B cell (primary cell): ENCODE measurements at regions of chr5 and their contacts with region 1.

Region 1: DNA sequence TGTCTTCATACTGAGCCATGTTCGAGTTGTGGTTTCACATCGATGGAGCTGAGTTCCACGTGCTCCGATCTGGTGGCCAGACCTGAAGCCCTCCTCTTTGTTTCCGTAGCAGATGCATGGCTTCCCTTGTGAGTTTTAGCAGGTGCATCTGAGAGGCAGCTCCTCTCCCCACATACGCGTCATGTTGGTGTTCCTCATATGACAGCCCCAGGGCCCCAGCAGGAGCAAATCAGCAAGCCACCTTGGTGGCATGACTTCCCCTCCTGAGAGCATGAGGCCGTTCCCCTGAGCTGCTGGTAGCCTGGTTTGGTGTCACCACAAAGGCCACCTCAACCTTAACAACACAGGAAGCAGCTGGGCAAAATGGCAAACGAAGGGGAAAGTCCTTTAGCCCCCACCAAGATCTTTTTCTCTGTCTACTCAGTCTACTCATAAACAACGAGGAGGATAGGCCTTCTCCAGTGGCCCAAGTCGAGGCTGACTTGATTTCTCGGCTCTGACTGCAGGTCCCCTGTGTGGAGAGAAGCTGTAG is 5.9 kb downstream of the CYFIP2 start:
- DNase-seq: peak; percentile 98
- ATAC-seq: peak; percentile 89
- H3K4me3 ChIP-seq: peak overlapping the region in 3 of 5 experiments; percentile 4 to 39 (median 32)
- H3K4me3 Mint-ChIP-seq: peak overlapping the region; percentile 82
- H3K27ac ChIP-seq: peak overlapping the region; percentile 99
- H3K27ac Mint-ChIP-seq: peak overlapping the region; percentile 99
- H3K4me1 ChIP-seq: peaks cover 81 to 92% of the 10 kb centered on the region in 2 donors
- H3K4me1 Mint-ChIP-seq: peaks cover 90% of the 10 kb centered on the region
- H3K27me3 ChIP-seq: no peaks in the 10 kb centered on the region
- H3K27me3 Mint-ChIP-seq: no peaks in the 10 kb centered on the region
- CTCF ChIP-seq: no peak

Region 2: GRCh38 chr5:156147251-156147947 is 1124.4 kb before region 1 on chr5:
- CTCF ChIA-PET with region 1: no interaction called
- POLR2A ChIA-PET with region 1: no interaction called
- intact Hi-C with region 1: no loop called
- DNase-seq: no peak
- ATAC-seq: no peak
- H3K4me3 ChIP-seq: no peak overlapping the region
- H3K4me3 Mint-ChIP-seq: no peak overlapping the region
- H3K27ac ChIP-seq: no peak overlapping the region
- H3K27ac Mint-ChIP-seq: no peak overlapping the region
- H3K4me1 ChIP-seq: no peaks in the 10 kb centered on the region
- H3K4me1 Mint-ChIP-seq: no peaks in the 10 kb centered on the region
- H3K27me3 ChIP-seq: no peaks in the 10 kb centered on the region
- H3K27me3 Mint-ChIP-seq: no peaks in the 10 kb centered on the region
- CTCF ChIP-seq: no peak

Region 3: GRCh38 chr5:157142317-157143126 is 129.3 kb before region 1 on chr5 and contains the start of gene MED7:
- CTCF ChIA-PET with region 1: no interaction called
- POLR2A ChIA-PET with region 1: interaction called, 13 read pairs
- intact Hi-C with region 1: loop called (anchors 1 kb)
- DNase-seq: peak; percentile 98
- ATAC-seq: peak; percentile 96
- H3K4me3 ChIP-seq: peak within 1 kb of the TSS; percentile 76 to 99 (median 97)
- H3K4me3 Mint-ChIP-seq: peak within 1 kb of the TSS; percentile 99
- H3K27ac ChIP-seq: peak within 1 kb of the TSS; percentile 95 to 96
- H3K27ac Mint-ChIP-seq: peak within 1 kb of the TSS; percentile 99
- H3K4me1 ChIP-seq: peaks cover 15 to 18% of the 10 kb centered on the region in 2 donors
- H3K4me1 Mint-ChIP-seq: peaks cover 28% of the 10 kb centered on the region
- H3K27me3 ChIP-seq: no peaks in the 10 kb centered on the region
- H3K27me3 Mint-ChIP-seq: no peaks in the 10 kb centered on the region
- CTCF ChIP-seq: no peak
- total RNA-seq, gene MED7: 19.3 and 21.4 TPM in 2 replicates

Region 4: DNA sequence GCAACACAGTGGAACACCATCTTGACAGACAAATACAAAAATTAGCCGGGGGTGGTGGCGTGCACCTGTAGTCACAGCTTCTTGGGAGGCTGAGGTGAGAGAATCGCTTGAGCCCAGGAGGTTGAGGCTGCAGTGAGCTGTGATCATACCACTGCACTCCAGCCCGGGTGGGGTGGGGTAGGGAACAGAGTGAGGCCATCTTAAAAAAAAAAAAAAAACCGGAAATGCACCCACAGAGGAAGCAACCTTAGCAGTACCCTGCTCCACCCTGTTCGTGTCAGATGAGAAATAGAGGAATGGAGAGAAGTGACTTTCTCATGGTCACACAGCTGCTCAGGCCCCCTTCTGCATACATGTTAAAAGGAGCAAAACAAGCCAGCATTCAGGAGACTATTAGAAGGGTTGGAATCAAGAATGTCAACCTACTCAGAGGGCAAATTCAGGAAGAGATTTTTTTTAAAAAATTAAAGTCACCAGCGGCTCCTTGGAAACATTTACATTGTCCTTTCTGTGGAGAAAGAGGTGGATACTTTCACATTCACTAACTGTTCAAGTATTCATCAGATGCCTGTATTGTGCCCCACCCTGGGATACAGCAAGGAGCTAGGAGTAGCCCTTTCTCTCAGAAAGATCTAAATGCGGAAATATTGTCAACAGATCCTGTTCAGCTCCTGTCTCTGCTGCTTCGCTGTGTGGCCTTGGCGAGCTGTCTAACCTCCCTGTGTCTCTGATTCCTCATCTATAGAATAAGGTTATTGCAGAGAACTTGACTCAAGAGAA is 35.1 kb after region 1 on chr5:
- CTCF ChIA-PET with region 1: interaction called, 25 read pairs
- POLR2A ChIA-PET with region 1: interaction called, 11 read pairs
- intact Hi-C with region 1: no loop called
- DNase-seq: peak; percentile 58
- ATAC-seq: peak; percentile 82
- H3K4me3 ChIP-seq: no peak overlapping the region
- H3K4me3 Mint-ChIP-seq: peak overlapping the region; percentile 63
- H3K27ac ChIP-seq: peak overlapping the region; percentile 64 to 79
- H3K27ac Mint-ChIP-seq: peak overlapping the region; percentile 85
- H3K4me1 ChIP-seq: peaks cover 18 to 35% of the 10 kb centered on the region in 2 donors
- H3K4me1 Mint-ChIP-seq: peaks cover 42% of the 10 kb centered on the region
- H3K27me3 ChIP-seq: no peaks in the 10 kb centered on the region
- H3K27me3 Mint-ChIP-seq: no peaks in the 10 kb centered on the region
- CTCF ChIP-seq: no peak

Region 5: GRCh38 chr5:157502143-157502647 is 230.4 kb after region 1 on chr5:
- CTCF ChIA-PET with region 1: no interaction called
- POLR2A ChIA-PET with region 1: no interaction called
- intact Hi-C with region 1: loop called (anchors 5 kb)
- DNase-seq: peak; percentile 87
- ATAC-seq: peak; percentile 76
- H3K4me3 ChIP-seq: no peak overlapping the region
- H3K4me3 Mint-ChIP-seq: peak overlapping the region; percentile 16
- H3K27ac ChIP-seq: peak overlapping the region; percentile 83 to 98
- H3K27ac Mint-ChIP-seq: peak overlapping the region; percentile 95
- H3K4me1 ChIP-seq: peaks cover 84 to 91% of the 10 kb centered on the region in 2 donors
- H3K4me1 Mint-ChIP-seq: peaks cover 87% of the 10 kb centered on the region
- H3K27me3 ChIP-seq: no peaks in the 10 kb centered on the region
- H3K27me3 Mint-ChIP-seq: no peaks in the 10 kb centered on the region
- CTCF ChIP-seq: no peak

Region 6: GRCh38 chr5:157731272-157732129 is 459.7 kb after region 1 on chr5 and contains the start of gene THG1L:
- CTCF ChIA-PET with region 1: no interaction called
- POLR2A ChIA-PET with region 1: no interaction called
- intact Hi-C with region 1: loop called (anchors 2 kb)
- DNase-seq: peak; percentile 93
- ATAC-seq: peak; percentile 84
- H3K4me3 ChIP-seq: peak within 1 kb of the TSS; percentile 67 to 94 (median 93)
- H3K4me3 Mint-ChIP-seq: peak within 1 kb of the TSS; percentile 98
- H3K27ac ChIP-seq: peak within 1 kb of the TSS; percentile 92 to 94
- H3K27ac Mint-ChIP-seq: peak within 1 kb of the TSS; percentile 99
- H3K4me1 ChIP-seq: peaks cover 21 to 26% of the 10 kb centered on the region in 2 donors
- H3K4me1 Mint-ChIP-seq: peaks cover 30% of the 10 kb centered on the region
- H3K27me3 ChIP-seq: no peaks in the 10 kb centered on the region
- H3K27me3 Mint-ChIP-seq: no peaks in the 10 kb centered on the region
- CTCF ChIP-seq: no peak
- total RNA-seq, gene THG1L: 14.1 and 14.6 TPM in 2 replicates